ENCODE measurements at regions of chr3 and their contacts with region 1.

Region 1: DNA sequence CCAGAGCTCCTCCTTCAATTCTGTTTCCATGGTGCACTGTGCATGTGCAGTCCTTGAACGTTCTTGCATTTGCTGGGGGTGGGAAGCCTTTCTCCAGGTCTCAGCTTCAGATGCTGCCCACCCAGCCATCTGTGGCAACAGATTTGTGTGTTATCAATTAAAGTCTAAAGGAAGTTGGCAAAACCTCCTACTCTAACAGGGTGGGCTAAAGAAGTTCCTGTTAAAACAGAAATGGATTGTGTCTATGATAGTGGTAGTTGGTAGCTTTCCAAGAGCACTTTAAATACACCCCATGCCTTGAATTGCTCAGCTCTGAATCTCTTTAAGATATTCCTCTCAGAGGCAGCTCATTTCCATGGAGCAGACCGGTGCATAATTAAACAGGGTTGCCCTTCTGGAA is 488.0 kb upstream of the SUCLG2 start:
- DNase-seq: no peak
- H3K4me3 Mint-ChIP-seq: no peak overlapping the region
- H3K27ac Mint-ChIP-seq: no peak overlapping the region
- H3K4me1 Mint-ChIP-seq: peaks cover 2% of the 10 kb centered on the region
- H3K27me3 Mint-ChIP-seq: no peaks in the 10 kb centered on the region

Region 2: DNA sequence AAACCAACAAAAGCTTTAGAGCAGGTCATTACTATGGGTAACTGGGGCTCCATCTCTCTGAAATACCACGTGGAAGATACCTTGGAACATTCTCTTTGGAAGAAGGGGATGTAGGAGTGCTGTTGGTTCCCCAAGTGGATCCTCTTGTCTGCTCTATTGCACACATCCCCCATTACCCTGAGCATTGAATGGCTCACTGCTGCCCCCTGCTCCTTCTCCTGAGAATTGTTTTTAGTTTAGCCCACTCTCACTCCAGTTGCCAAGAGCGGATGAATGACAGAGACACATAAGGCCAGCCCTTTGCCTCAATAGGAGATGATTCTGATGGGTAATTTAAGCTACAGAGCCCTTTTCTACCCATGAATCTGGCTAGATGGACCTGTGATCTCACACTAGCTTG is 352.4 kb before region 1 on chr3:
- CTCF ChIA-PET with region 1: no interaction called
- intact Hi-C with region 1: no loop called
- DNase-seq: peak; percentile 81
- H3K4me3 Mint-ChIP-seq: no peak overlapping the region
- H3K27ac Mint-ChIP-seq: no peak overlapping the region
- H3K4me1 Mint-ChIP-seq: peaks cover 14% of the 10 kb centered on the region
- H3K27me3 Mint-ChIP-seq: no peaks in the 10 kb centered on the region

Region 3: GRCh38 chr3:68345781-68346180 is 203.3 kb after region 1 on chr3:
- CTCF ChIA-PET with region 1: no interaction called
- intact Hi-C with region 1: loop called (anchors 10 kb)
- DNase-seq: no peak
- H3K4me3 Mint-ChIP-seq: no peak overlapping the region
- H3K27ac Mint-ChIP-seq: no peak overlapping the region
- H3K4me1 Mint-ChIP-seq: no peaks in the 10 kb centered on the region
- H3K27me3 Mint-ChIP-seq: no peaks in the 10 kb centered on the region

Measured in activated naive CD4-positive, alpha-beta T cell treated with anti-CD3 and anti-CD28 coated beads for 36 hours (primary cell).